PC-9 (cell line): ENCODE measurements at regions of chr2 and their contacts with region 1.

Region 1: GRCh38 chr2:18889565-18890332 is 300.4 kb upstream of the NT5C1B start:
- DNase-seq: no peak
- H3K4me3 ChIP-seq: no peak overlapping the region
- H3K27ac ChIP-seq: no peak overlapping the region
- H3K4me1 ChIP-seq: no peaks in the 10 kb centered on the region
- H3K27me3 ChIP-seq: no peaks in the 10 kb centered on the region
- CTCF ChIP-seq: no peak

Region 2: DNA sequence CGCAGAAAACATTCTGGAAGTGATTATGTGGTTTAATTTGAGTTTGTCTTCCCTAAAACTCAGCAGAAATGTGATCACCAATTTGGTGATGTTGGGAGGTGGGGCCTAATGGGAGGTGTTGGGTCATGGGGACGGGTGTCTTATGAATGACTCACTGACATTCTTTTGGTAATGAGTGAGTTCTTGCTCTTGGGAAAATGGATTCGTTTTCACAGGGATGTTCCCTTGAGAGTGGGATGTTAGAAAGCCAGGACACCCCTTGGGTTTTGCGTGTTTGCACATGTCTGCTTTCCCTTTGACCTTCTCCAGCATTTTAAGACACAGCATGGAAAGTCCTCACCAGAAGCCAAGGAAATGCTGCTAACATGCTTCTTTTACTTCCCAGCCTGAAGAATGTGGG is 21.1 kb after region 1 on chr2:
- CTCF ChIA-PET with region 1: no interaction called
- POLR2A ChIA-PET with region 1: no interaction called
- intact Hi-C with region 1: no loop called
- DNase-seq: peak; percentile 35 to 70
- H3K4me3 ChIP-seq: no peak overlapping the region
- H3K27ac ChIP-seq: peak overlapping the region; percentile 27; the same call in 1 of the 2 replicates
- H3K4me1 ChIP-seq: peaks cover 13% of the 10 kb centered on the region
- H3K27me3 ChIP-seq: no peaks in the 10 kb centered on the region
- CTCF ChIP-seq: no peak

Region 3: GRCh38 chr2:19942199-19942598 is 1052.5 kb after region 1 on chr2:
- CTCF ChIA-PET with region 1: no interaction called
- POLR2A ChIA-PET with region 1: interaction called, 22 read pairs
- intact Hi-C with region 1: no loop called
- DNase-seq: no peak
- H3K4me3 ChIP-seq: no peak overlapping the region
- H3K27ac ChIP-seq: no peak overlapping the region
- H3K4me1 ChIP-seq: 0 out of 2 replicates have a peak, but pooled peaks cover 3% of the 10 kb centered on the region
- H3K27me3 ChIP-seq: no peaks in the 10 kb centered on the region
- CTCF ChIP-seq: no peak